Heart right ventricle (tissue), 16 donors: ENCODE measurements at regions of chr3 and their contacts with region 1.

Region 1: DNA sequence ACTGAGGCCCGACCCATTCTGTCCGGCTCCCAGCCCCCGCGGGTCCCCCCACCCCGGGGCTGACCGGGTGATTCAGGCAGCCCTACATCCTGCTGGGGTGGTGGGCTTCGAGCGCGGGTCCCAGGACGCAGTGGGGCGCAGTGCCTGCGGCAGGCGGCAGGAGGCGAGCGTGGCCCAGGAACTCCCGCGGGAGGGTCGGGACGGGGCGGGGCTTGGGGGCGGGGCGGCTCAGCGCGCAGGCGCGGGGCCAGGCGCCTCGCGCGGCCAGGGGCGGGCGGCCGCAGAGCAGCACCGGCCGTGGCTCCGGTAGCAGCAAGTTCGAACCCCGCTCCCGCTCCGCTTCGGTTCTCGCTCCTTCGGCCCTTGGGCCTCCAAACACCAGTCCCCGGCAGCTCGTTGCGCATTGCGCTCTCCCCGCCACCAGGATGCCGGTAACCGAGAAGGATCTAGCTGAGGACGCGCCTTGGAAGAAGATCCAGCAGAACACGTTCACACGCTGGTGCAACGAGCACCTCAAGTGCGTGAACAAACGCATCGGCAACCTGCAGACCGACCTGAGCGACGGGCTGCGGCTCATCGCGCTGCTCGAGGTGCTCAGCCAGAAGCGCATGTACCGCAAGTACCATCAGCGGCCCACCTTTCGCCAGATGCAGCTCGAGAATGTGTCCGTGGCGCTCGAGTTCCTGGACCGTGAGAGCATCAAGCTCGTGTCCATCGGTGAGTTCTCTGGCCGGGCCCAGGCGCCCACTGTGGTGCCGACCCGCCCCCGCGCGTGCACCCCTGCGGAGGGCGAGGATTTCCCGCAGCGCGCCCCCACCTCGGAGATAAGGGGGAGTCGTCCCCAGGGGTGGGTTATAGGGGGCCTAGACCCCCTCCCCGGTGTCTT is at the start of gene FLNB:
- DNase-seq: peak; percentile 57 to 81
- ATAC-seq: peak; percentile 87 to 95 (median 90)
- H3K4me3 ChIP-seq: peak within 1 kb of the TSS; percentile 62 to 99 (median 92)
- H3K27ac ChIP-seq: peak within 1 kb of the TSS; percentile 42 to 88 (median 81)
- H3K4me1 ChIP-seq: peaks cover 0 to 50% (median 39%) of the 10 kb centered on the region in 9 donors
- H3K27me3 ChIP-seq: no peaks in the 10 kb centered on the region
- CTCF ChIP-seq: peak; percentile 58 to 82 (median 75)
- total RNA-seq, gene FLNB: 27.4 to 61.8 (median 38.6) TPM

Region 2: DNA sequence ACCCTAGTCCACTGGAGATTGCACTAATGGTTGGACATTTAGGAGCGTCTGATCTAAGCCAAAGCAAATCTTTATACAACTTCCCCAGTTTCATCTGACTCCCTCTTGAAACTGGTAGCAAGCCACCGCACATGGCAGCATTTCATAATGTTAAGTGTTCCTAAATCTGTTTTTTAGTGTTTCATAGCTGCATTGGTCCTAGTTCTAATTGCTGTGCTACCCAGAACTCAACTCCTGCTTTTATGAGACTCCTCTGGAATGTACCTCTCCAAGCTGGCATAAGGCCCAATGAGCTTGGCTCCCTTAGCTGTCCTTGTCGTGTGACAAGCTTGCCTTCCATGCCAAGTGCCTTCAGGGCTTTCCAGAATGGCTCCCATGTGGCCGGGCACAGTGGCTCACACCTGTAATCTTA is 65.5 kb before region 1 on chr3:
- intact Hi-C with region 1: loop called in 1 of 10 experiments (anchors 5 kb)
- DNase-seq: peak; percentile 39 to 57
- ATAC-seq: peak; percentile 51 to 82 (median 74)
- H3K4me3 ChIP-seq: no peak overlapping the region
- H3K27ac ChIP-seq: peak overlapping the region in 8 of 10 donors; percentile 8 to 78 (median 52)
- H3K4me1 ChIP-seq: peaks cover 0 to 37% (median 28%) of the 10 kb centered on the region in 9 donors
- H3K27me3 ChIP-seq: no peaks in the 10 kb centered on the region
- CTCF ChIP-seq: no peak

Region 3: DNA sequence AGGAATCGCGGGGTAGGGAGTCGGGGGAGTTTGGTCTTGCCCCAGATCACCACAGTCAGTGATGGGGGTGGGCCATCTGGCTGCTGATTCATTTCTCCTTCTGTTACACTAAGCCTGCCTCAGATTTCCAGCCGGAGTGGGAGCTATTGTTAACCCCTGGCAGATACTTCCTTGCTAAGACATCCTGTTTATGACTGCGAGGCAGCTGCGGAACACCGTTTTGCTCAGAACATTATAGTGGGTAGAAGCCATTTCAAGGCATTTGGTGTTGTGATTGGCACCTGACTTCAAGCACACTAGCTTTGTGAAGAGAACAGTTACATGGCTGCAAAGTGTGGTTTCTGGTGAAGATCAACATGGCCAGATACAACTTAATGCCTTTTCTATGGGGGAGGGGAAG is 73.7 kb after region 1 on chr3:
- intact Hi-C with region 1: loop called in 1 of 10 experiments (anchors 5 kb)
- DNase-seq: peak in 1 of 2 donors; percentile 50
- ATAC-seq: peak; percentile 37 to 88 (median 79)
- H3K4me3 ChIP-seq: no peak overlapping the region
- H3K27ac ChIP-seq: peak overlapping the region in 9 of 10 donors; percentile 27 to 78 (median 56)
- H3K4me1 ChIP-seq: peaks cover 0 to 43% (median 24%) of the 10 kb centered on the region in 9 donors
- H3K27me3 ChIP-seq: no peaks in the 10 kb centered on the region
- CTCF ChIP-seq: no peak

Region 4: DNA sequence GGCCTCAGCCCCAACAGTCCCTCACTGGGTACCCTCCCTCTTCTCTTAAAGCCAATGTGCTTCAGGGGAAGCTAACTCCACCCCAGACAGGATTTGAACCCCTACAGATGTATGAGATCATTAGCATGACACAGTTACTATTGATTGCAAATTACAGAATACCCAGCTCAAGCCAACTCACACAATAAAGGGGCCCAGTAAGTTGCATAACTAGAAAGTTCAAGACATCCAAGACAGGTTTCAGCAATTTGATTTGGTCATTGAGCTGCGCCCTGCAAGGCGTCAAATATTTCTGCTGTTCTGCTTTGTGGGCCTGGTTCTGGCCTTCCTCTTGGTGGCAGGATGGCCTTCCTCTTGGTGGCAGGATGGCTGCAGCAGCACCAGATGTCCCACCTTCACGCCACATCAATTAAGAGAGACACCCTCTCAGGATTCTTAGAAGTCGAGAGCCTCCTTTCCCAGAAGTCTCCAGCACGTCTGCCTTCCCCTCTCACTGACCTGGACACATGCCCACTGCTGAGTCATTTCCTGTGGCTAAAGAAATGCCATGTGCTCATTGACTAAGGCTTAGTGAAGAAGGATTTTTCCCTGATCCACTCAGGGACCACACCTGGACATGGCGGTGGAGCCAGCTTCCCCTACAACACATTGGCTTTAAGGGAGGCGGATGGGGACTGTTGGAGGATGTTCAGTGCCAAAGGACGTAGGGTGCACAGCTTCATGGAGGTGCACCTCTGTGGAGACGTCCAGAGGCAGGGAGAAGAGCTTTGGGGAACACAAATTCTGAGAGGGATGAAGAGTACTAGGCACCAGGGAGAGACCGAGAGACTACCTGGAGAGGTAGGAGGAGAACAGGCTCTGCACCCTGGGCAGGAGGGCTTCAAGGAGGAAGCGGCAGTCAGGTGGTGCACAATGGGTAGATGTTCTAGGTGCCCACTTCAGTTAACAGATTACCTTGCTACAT is 153.3 kb after region 1 on chr3:
- intact Hi-C with region 1: loop called in 3 of 10 experiments (anchors 5 kb)
- DNase-seq: peak in 1 of 2 donors; percentile 60
- ATAC-seq: peak in 2 of 8 donors; percentile 21 to 34
- H3K4me3 ChIP-seq: no peak overlapping the region
- H3K27ac ChIP-seq: peak overlapping the region in 5 of 10 donors; percentile 36 to 91 (median 83)
- H3K4me1 ChIP-seq: peaks cover 0 to 53% (median 37%) of the 10 kb centered on the region in 9 donors
- H3K27me3 ChIP-seq: no peaks in the 10 kb centered on the region
- CTCF ChIP-seq: no peak

Region 5: DNA sequence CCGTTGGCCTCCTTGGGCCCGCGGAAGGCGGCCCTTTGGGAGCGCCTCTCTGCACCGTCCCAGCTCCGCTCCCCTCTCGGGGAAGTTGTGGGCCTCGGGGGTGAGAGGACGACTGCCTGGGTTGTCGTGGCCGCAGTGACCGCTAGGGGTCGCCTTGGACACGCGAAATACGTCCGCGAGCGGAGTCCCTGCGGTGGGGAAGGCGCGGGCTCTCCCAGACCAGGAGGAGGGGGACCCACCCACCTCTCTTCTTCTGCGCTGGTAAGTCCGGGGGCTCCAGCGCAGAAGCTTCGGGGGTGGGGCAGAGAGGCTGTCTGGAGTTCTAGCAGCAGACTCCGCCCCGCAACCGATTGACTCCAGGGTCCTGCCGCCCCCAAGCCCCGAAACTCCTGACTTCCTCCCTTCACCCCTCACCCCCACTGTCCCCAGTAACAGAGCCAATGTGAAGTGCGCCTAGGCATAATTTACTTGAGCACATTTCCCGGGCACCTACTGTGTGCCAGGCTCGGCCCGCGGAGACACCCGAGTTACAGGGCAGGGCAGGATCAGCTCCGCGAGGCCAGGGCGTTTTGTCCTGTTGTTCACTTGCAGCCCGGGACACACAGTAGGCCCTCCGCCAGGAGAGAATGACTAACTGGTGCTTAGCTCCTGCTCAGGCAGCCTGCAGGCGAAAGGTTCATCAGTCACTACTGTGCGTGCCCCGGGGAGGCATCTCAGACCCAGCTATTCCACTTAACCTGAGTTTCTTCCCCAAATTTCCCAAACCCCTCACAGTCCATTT is 169.6 kb after region 1 on chr3:
- intact Hi-C with region 1: loop called in 8 of 10 experiments (anchors 2 to 5 kb)
- DNase-seq: peak; percentile 90 to 94
- ATAC-seq: peak; percentile 80 to 87 (median 86)
- H3K4me3 ChIP-seq: peak overlapping the region in 9 of 10 donors; percentile 35 to 60 (median 50)
- H3K27ac ChIP-seq: peak overlapping the region in 1 of 10 donors; percentile 8
- H3K4me1 ChIP-seq: peaks cover 14 to 52% (median 42%) of the 10 kb centered on the region in 9 donors
- H3K27me3 ChIP-seq: peaks cover 0 to 7% (median 0%) of the 10 kb centered on the region in 7 donors
- CTCF ChIP-seq: peak; percentile 89 to 97 (median 95)